CD4-positive, alpha-beta memory T cell (primary cell): ENCODE measurements at regions of chr15 and their contacts with region 1.

Region 1: GRCh38 chr15:64893481-64894394 is 18.0 kb upstream of the ANKDD1A start:
- DNase-seq: peak; percentile 94 to 98 (median 96)
- H3K4me3 ChIP-seq: peak overlapping the region; percentile 53 to 59
- H3K4me3 Mint-ChIP-seq: peak overlapping the region; percentile 84 to 93 (median 86)
- H3K27ac ChIP-seq: peak overlapping the region; percentile 89
- H3K27ac Mint-ChIP-seq: peak overlapping the region; percentile 95 to 99 (median 98)
- H3K4me1 ChIP-seq: peaks cover 74% of the 10 kb centered on the region
- H3K4me1 Mint-ChIP-seq: peaks cover 53 to 73% (median 64%) of the 10 kb centered on the region in 4 donors
- H3K27me3 ChIP-seq: no peaks in the 10 kb centered on the region
- H3K27me3 Mint-ChIP-seq: no peaks in the 10 kb centered on the region

Region 2: GRCh38 chr15:64387562-64388168 is 506.1 kb before region 1 on chr15 and contains the start of gene TRIP4:
- CTCF ChIA-PET with region 1: no interaction called
- POLR2A ChIA-PET with region 1: interaction called, 17 read pairs
- intact Hi-C with region 1: no loop called
- DNase-seq: peak; percentile 95 to 98 (median 96)
- H3K4me3 ChIP-seq: peak within 1 kb of the TSS; percentile 79 to 89
- H3K4me3 Mint-ChIP-seq: peak within 1 kb of the TSS; percentile 96 to 100 (median 98)
- H3K27ac ChIP-seq: peak within 1 kb of the TSS; percentile 64
- H3K27ac Mint-ChIP-seq: peak within 1 kb of the TSS; percentile 80 to 99 (median 96)
- H3K4me1 ChIP-seq: peaks cover 12% of the 10 kb centered on the region
- H3K4me1 Mint-ChIP-seq: peaks cover 16 to 19% (median 19%) of the 10 kb centered on the region in 4 donors
- H3K27me3 ChIP-seq: no peaks in the 10 kb centered on the region
- H3K27me3 Mint-ChIP-seq: no peaks in the 10 kb centered on the region
- total RNA-seq, gene TRIP4: 28.2 to 29.4 TPM

Region 3: DNA sequence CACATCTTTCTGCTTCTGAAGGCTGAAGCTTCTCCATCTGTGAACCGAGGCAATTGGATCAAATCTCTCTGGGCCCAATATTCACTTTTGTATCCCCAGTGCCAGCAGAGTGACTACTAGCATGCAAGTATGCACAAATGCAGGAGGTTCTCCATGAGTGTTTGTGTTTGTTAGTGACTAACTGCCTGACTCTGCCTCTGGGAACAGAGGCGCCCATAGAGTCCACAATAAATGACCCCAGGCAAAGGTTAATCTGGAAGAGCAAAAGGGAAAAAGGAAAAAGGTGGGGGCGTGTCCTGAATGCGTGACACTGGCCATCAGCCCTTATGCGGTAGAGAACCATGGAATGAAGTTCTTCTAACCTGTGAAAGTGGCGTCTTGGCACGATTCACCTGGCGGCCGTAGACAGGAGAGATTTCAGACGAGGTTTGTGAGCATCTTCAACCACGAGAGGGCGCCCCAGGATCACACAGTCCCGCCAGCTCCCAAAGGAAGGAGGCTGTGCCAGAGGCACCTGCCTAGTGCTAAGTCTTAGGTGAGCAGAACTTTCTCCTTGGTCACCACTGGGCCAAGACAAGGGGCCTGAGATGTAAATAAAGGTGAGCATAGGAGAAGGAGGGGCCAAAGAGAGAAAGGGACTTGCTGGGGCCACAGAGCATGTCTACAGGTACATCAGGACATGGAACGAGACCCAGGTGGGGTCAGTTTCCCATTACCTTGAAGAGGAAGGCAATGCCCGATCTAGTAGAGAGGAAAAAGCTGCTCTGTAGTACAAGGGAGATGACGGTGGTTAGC is 162.5 kb before region 1 on chr15:
- CTCF ChIA-PET with region 1: interaction called, 37 read pairs
- POLR2A ChIA-PET with region 1: interaction called, 10 read pairs
- intact Hi-C with region 1: loop called (anchors 1 kb)
- DNase-seq: peak; percentile 77 to 83 (median 80)
- H3K4me3 ChIP-seq: no peak overlapping the region
- H3K4me3 Mint-ChIP-seq: no peak overlapping the region
- H3K27ac ChIP-seq: no peak overlapping the region
- H3K27ac Mint-ChIP-seq: peak overlapping the region in 1 of 7 donors; percentile 72
- H3K4me1 ChIP-seq: peaks cover 4% of the 10 kb centered on the region
- H3K4me1 Mint-ChIP-seq: peaks cover 7 to 13% (median 10%) of the 10 kb centered on the region in 4 donors
- H3K27me3 ChIP-seq: no peaks in the 10 kb centered on the region
- H3K27me3 Mint-ChIP-seq: peaks cover 0 to 4% of the 10 kb centered on the region in 2 donors

Region 4: GRCh38 chr15:64836023-64836536 is 57.7 kb before region 1 on chr15:
- CTCF ChIA-PET with region 1: interaction called, 162 read pairs
- POLR2A ChIA-PET with region 1: interaction called, 331 read pairs
- intact Hi-C with region 1: loop called (anchors 1 kb)
- DNase-seq: no peak
- H3K4me3 ChIP-seq: peak overlapping the region in 1 of 2 donors; percentile 23
- H3K4me3 Mint-ChIP-seq: peak overlapping the region; percentile 49 to 79 (median 65)
- H3K27ac ChIP-seq: no peak overlapping the region
- H3K27ac Mint-ChIP-seq: peak overlapping the region; percentile 40 to 88 (median 80)
- H3K4me1 ChIP-seq: peaks cover 60% of the 10 kb centered on the region
- H3K4me1 Mint-ChIP-seq: peaks cover 37 to 54% (median 44%) of the 10 kb centered on the region in 4 donors
- H3K27me3 ChIP-seq: no peaks in the 10 kb centered on the region
- H3K27me3 Mint-ChIP-seq: no peaks in the 10 kb centered on the region

Region 5: GRCh38 chr15:64865998-64866520 is 27.7 kb before region 1 on chr15:
- CTCF ChIA-PET with region 1: interaction called, 5 read pairs
- POLR2A ChIA-PET with region 1: interaction called, 17 read pairs
- intact Hi-C with region 1: no loop called
- DNase-seq: no peak
- H3K4me3 ChIP-seq: no peak overlapping the region
- H3K4me3 Mint-ChIP-seq: no peak overlapping the region
- H3K27ac ChIP-seq: no peak overlapping the region
- H3K27ac Mint-ChIP-seq: peak overlapping the region in 3 of 7 donors; percentile 50 to 55 (median 53)
- H3K4me1 ChIP-seq: no peaks in the 10 kb centered on the region
- H3K4me1 Mint-ChIP-seq: peaks cover 0 to 6% (median 4%) of the 10 kb centered on the region in 4 donors
- H3K27me3 ChIP-seq: no peaks in the 10 kb centered on the region
- H3K27me3 Mint-ChIP-seq: no peaks in the 10 kb centered on the region

Region 6: DNA sequence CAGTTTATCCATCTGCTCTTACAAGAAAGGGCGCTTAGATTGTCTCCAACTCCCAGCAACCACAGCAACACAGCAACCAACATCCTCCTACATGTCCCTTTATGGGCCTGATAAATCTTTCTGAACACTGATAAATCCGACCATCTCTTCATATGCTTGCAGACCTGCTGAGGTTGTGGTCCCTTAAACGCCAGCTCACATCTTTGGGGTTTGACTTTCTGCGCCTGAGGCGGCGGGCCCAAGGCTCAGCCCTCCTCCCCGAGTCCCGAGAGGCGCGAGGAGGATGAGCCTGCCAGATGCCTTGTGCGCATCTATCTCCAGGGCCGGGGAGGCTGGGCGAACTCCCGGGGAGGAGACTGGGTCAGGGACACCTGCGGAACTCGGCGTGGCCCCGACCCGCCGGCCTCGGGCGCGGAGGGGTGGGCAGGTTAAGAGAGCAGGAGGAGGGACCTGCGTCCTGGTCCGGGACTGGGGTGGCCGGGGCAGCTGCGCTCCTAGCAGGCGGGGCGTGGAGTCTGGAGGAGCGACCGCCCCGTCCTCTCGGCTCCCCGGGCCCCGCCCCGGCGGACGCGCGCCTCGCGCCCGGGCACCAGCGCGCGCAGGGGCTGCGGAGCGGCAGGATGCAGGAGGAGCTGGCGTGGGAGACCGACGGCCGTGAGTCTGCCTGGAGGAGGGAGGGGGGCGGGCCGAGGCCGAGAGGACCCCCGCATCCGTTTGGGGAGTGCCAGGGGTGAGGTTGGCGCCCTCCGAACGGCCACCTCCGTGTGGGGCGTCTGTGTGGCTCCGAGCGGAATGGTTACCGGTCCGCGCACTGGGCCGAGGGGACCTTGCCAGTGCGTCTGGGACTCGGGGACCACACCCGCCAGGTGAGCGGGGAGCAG is 17.8 kb after region 1 on chr15 and contains the start of gene ANKDD1A:
- CTCF ChIA-PET with region 1: interaction called, 48 read pairs
- POLR2A ChIA-PET with region 1: interaction called, 82 read pairs
- intact Hi-C with region 1: no loop called
- DNase-seq: peak in 4 of 5 donors; percentile 15 to 39 (median 32)
- H3K4me3 ChIP-seq: peak within 1 kb of the TSS in 1 of 2 donors; percentile 47
- H3K4me3 Mint-ChIP-seq: peak within 1 kb of the TSS; percentile 51 to 84 (median 73)
- H3K27ac ChIP-seq: no peak within 1 kb of the TSS
- H3K27ac Mint-ChIP-seq: peak within 1 kb of the TSS in 1 of 7 donors; percentile 6
- H3K4me1 ChIP-seq: peaks cover 7% of the 10 kb centered on the region
- H3K4me1 Mint-ChIP-seq: peaks cover 6 to 8% (median 7%) of the 10 kb centered on the region in 4 donors
- H3K27me3 ChIP-seq: no peaks in the 10 kb centered on the region
- H3K27me3 Mint-ChIP-seq: peaks cover 0 to 3% of the 10 kb centered on the region in 2 donors
- total RNA-seq, gene ANKDD1A: 4.5 to 5.9 TPM